Activated naive CD8-positive, alpha-beta T cell treated with anti-CD3 and anti-CD28 coated beads, Interleukin-2, amount 10 ng/mL, durations not matched to agents 7 days and 5 days (primary cell): ENCODE measurements at regions of chr7 and their contacts with region 1.

Region 1: DNA sequence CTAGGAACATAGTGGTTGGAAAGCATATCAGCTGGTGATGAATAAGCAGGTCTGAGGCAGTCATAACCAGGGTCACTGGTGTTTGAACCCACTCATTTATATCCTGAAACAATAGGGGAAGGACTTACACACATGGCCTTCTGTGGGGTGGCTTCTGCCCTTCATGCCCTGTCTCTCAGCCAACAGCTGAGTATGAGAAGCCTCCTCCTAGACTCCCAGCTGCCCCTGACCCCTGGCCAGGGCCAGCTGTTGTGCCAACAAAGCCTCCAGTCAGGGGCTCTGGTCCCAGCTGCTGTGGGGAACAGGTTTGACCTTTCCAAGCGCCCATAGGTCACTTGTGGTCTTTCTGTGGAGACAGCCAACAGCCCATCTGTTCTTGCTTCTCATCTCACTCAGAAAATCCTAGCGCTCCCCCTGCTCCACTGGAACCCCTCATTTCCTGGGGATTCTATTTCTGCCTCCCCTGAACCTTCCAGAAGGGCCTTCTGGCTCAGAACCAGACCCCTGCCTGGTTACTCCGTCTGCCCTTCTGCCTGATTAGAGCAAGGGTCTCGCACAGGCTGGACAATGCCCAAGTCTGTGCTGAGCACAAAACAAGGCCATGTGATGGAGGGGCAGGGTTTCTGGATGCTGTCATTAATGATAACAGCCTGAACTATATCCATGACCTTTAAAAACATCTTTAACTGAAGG is 9.7 kb upstream of the PURB start:
- DNase-seq: no peak
- ATAC-seq: no peak
- H3K4me3 Mint-ChIP-seq: no peak overlapping the region
- H3K27ac Mint-ChIP-seq: peak overlapping the region; percentile 23
- H3K4me1 Mint-ChIP-seq: peaks cover 32% of the 10 kb centered on the region
- H3K27me3 Mint-ChIP-seq: no peaks in the 10 kb centered on the region

Region 2: DNA sequence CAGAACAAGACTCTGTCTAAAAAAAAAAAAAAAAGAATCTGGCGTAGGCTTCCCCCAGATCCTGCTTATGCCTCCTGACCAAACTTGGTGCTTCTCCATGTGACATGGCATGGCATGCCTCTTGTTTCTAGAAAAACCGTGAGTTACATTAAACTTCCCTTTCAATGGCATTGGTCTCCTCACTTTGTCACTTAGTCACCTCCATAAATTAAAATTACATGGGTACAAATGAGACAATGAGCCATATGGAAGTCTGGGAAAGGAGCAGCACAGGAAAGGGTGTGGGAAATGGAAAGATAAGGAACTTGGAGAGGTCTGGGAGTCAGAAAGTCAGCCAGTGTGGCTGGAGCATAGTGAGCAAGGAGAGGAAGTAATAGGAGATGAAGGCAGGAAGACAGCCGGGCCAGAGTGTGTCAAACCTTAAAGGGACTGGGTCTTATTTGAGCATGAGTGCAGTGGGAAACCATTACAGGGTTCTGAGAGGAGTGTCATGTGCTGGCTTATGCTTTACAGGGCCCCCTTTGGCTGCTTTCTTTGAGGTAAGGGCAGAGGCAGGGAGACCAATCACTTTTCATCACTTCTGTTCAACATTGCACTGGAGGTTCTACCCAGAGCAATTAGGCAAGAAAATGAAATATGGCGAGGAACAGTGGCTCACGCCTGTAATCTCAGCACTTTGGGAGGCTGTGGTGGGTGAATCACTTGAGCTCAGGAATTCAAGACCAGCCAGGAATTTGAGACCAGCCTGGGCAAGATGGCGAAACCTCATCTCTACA is 167.7 kb before region 1 on chr7:
- POLR2A ChIA-PET with region 1: no interaction called
- DNase-seq: no peak
- ATAC-seq: peak; percentile 33
- H3K4me3 Mint-ChIP-seq: no peak overlapping the region
- H3K27ac Mint-ChIP-seq: no peak overlapping the region
- H3K4me1 Mint-ChIP-seq: peaks cover 5% of the 10 kb centered on the region
- H3K27me3 Mint-ChIP-seq: peaks cover 4% of the 10 kb centered on the region

Region 3: DNA sequence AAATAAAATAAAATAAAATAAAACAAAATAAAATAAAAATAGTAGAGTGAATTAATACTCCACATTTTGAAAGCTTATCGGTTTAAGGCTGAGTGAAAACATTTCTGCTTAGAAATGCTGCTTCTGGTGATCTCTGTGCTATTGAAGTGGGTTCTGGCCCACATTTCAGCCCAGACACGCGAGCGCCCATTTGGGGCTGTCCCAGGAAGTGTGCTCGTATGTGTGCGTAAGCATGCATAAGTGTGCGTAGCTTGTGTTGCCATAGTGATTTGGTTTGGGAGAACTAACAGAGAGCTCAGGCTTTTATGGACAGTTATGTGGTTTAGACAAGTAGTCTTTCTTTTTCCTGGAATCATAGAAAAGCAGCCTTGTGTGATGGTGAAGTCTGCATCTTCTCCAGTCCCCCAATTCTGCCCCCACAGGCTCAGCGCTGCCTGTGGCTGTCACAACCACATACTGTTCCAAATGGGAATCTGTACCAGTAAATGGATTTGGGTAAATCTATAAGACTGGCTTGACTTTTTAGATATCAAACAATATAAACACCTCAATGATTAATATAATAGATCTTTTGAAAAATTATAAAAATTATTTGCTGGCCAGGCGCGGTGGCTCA is 20.1 kb after region 1 on chr7:
- POLR2A ChIA-PET with region 1: interaction called, 14 read pairs
- DNase-seq: peak; percentile 79
- ATAC-seq: peak; percentile 97
- H3K4me3 Mint-ChIP-seq: peak overlapping the region; percentile 75
- H3K27ac Mint-ChIP-seq: peak overlapping the region; percentile 90
- H3K4me1 Mint-ChIP-seq: peaks cover 29% of the 10 kb centered on the region
- H3K27me3 Mint-ChIP-seq: no peaks in the 10 kb centered on the region

Region 4: GRCh38 chr7:44955733-44956132 is 60.7 kb after region 1 on chr7:
- POLR2A ChIA-PET with region 1: no interaction called
- DNase-seq: no peak
- ATAC-seq: no peak
- H3K4me3 Mint-ChIP-seq: no peak overlapping the region
- H3K27ac Mint-ChIP-seq: no peak overlapping the region
- H3K4me1 Mint-ChIP-seq: peaks cover 18% of the 10 kb centered on the region
- H3K27me3 Mint-ChIP-seq: peaks cover 25% of the 10 kb centered on the region